Natural killer cell (primary cell): ENCODE measurements at regions of chr3 and their contacts with region 1.

Region 1: GRCh38 chr3:195863121-195864006 is 45.0 kb downstream of the TNK2 start:
- DNase-seq: peak; percentile 65 to 70
- ATAC-seq: peak; percentile 86 to 95 (median 89)
- H3K4me3 ChIP-seq: no peak overlapping the region
- H3K4me3 Mint-ChIP-seq: no peak overlapping the region
- H3K27ac ChIP-seq: no peak overlapping the region
- H3K27ac Mint-ChIP-seq: peak overlapping the region; percentile 46 to 51
- H3K4me1 ChIP-seq: peaks cover 8% of the 10 kb centered on the region
- H3K4me1 Mint-ChIP-seq: peaks cover 11 to 17% of the 10 kb centered on the region in 2 donors
- H3K27me3 ChIP-seq: peaks cover 2% of the 10 kb centered on the region
- H3K27me3 Mint-ChIP-seq: peaks cover 0 to 4% of the 10 kb centered on the region in 2 donors
- CTCF ChIP-seq: peak; percentile 73

Region 2: DNA sequence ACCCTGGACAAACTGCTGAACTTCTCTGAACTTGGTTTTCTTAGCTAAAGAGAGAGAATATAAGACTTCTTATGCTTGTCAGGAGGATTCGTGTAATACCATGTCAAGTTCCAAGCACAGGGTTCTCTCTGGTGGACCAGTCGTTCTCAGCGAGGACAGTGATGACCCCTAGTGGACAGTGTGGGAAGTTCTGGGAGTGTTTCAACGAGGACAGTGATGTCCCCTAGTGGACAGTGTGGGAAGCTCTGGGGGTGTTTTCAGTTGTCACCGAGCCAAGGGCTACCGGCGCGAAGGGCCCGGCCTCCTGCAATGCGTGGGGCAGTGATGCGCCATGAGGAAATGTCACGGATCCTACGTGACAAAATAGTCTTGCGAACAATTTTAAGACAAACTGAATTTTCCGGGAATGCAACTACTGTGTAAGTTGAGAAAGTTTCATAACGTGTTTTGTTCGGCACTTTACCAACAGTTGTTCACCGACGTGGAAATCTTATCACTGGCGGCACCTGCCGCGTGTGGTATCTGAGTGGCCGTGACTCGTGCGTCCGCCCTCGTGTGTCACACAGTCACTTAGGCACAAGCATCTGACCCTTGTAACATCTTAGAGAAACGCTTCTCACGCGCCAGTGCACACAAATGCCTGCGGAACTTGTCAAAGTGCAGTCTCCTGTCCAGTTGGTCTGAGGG is 12.4 kb before region 1 on chr3:
- intact Hi-C with region 1: no loop called
- DNase-seq: peak; percentile 82 to 96
- ATAC-seq: peak; percentile 99 to 100 (median 100)
- H3K4me3 ChIP-seq: no peak overlapping the region
- H3K4me3 Mint-ChIP-seq: peak overlapping the region; percentile 8
- H3K27ac ChIP-seq: no peak overlapping the region
- H3K27ac Mint-ChIP-seq: no peak overlapping the region
- H3K4me1 ChIP-seq: peaks cover 6% of the 10 kb centered on the region
- H3K4me1 Mint-ChIP-seq: peaks cover 8 to 9% of the 10 kb centered on the region in 2 donors
- H3K27me3 ChIP-seq: no peaks in the 10 kb centered on the region
- H3K27me3 Mint-ChIP-seq: peaks cover 3 to 7% of the 10 kb centered on the region in 2 donors
- CTCF ChIP-seq: peak; percentile 100

Region 3: GRCh38 chr3:195894780-195895607 is 31.6 kb after region 1 on chr3:
- intact Hi-C with region 1: loop called (anchors 1 kb)
- DNase-seq: peak; percentile 52 to 89
- ATAC-seq: peak; percentile 63 to 81 (median 74)
- H3K4me3 ChIP-seq: peak overlapping the region; percentile 78
- H3K4me3 Mint-ChIP-seq: peak overlapping the region; percentile 97
- H3K27ac ChIP-seq: peak overlapping the region; percentile 86
- H3K27ac Mint-ChIP-seq: peak overlapping the region; percentile 94 to 95
- H3K4me1 ChIP-seq: peaks cover 55% of the 10 kb centered on the region
- H3K4me1 Mint-ChIP-seq: peaks cover 39 to 54% of the 10 kb centered on the region in 2 donors
- H3K27me3 ChIP-seq: no peaks in the 10 kb centered on the region
- H3K27me3 Mint-ChIP-seq: no peaks in the 10 kb centered on the region
- CTCF ChIP-seq: peak; percentile 93

Region 4: GRCh38 chr3:195907934-195908693 is 44.8 kb after region 1 on chr3 and contains the start of gene TNK2:
- intact Hi-C with region 1: no loop called
- DNase-seq: peak; percentile 49 to 81
- ATAC-seq: peak; percentile 32 to 58 (median 32)
- H3K4me3 ChIP-seq: peak within 1 kb of the TSS; percentile 62
- H3K4me3 Mint-ChIP-seq: peak within 1 kb of the TSS; percentile 93
- H3K27ac ChIP-seq: peak within 1 kb of the TSS; percentile 97
- H3K27ac Mint-ChIP-seq: peak within 1 kb of the TSS; percentile 97 to 100
- H3K4me1 ChIP-seq: peaks cover 51% of the 10 kb centered on the region
- H3K4me1 Mint-ChIP-seq: peaks cover 48% of the 10 kb centered on the region in 2 donors
- H3K27me3 ChIP-seq: no peaks in the 10 kb centered on the region
- H3K27me3 Mint-ChIP-seq: no peaks in the 10 kb centered on the region
- CTCF ChIP-seq: no peak
- total RNA-seq, gene TNK2: 169 to 207 (median 171) TPM